GM18951 (cell line): ENCODE measurements at regions of chr5 and their contacts with region 1.

Region 1: DNA sequence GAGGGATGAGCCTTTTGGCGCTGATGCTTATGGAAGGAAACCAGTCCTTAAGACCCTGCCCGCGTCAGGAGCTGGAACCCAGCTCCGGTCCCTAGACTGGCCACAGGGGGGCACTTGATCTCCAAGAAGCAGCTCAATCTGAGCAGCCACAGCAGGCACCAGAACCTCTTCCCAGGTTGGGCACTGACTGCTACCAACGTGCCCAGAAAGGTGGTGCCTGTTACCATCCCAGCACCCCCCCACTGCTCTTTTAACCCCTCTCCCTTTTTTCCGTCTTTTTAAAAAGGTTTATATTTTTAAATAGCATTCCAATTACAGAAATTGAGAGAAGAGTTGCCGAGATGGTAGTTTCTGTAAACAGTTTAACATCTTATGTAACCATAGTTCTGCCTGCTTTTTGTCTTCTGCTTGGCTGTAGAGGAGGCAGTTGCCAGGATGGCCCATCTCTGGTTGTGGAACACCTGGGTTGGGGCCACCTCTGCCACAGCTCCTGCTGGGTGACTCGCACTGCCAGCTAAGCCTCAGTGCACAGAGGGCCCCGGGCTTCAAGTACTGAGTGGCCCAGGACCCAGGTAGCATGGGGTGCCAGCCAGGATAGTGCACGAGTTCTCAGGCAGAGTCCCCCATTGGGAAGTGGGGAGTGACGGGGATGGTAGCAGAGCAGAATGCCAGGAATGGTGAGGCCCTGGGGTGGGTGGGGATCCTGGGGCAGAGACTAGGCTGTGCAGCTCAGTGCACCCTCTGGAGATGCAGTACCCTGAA is 62.8 kb downstream of the PFDN1 start:
- POLR2A ChIP-seq: no peak

Region 2: DNA sequence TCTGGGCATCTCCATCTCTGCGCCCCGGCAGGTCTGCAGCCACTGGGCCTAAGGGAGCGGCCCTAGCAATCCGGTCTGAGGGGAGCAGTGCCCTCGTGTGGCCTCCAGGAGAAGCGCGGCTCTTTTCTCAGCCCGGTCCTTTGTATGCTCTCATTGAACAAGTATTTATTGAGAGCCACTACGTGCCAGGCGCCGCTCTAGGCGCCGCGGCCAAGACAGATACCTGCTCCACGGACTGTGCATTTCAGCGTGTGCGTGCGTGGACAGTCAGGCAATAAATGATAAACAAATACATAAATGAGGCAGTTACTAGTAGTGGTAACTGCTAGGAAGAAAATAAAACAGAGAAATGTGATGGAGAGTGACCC is 117.6 kb after region 1 on chr5:
- in situ Hi-C with region 1: loop called (anchors 5 kb)
- POLR2A ChIP-seq: no peak